ENCODE measurements at regions of chr1 and their contacts with region 1.

Region 1: DNA sequence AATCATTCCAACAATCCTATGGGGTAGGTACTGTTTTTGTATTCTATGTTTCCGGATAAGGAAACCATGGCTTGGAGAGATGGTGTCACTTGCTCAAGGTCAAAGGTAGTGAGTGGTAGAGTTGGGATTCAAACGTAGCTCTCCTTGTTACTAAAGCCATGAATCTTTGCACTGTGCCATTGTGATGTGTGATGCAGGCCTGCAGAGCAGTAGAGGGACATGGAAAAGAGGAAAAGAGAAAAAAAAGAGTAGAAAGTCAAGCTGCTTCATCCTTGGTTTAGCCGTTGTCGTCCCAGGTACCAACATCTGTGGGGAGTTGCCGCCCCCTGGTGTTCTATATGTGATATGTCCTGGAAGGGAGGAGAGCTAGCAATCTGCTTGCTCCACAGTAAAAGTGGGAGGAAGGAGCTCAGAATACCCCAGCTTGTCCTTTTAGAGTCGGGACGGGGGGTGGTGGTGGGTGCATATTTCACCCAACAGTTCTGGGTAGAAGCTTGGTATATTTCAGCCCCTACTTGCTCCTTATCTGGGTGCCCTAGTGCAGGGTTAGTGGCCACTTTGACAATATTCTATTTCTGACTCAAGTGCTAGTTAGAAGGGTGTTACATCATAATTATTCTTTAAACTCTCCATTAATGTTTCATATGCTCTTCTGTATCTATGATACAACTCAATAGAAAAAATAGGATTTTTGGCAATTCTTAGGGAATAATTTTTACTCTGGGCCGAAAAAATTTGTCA is 98.4 kb downstream of the EBNA1BP2 start:
- DNase-seq: peak; percentile 46 to 80 (median 69)
- ATAC-seq: peak; percentile 90
- H3K4me3 ChIP-seq: no peak overlapping the region
- H3K4me3 Mint-ChIP-seq: no peak overlapping the region
- H3K27ac ChIP-seq: no peak overlapping the region
- H3K27ac Mint-ChIP-seq: peak overlapping the region in 2 of 9 donors; percentile 33 to 89
- H3K4me1 ChIP-seq: no peaks in the 10 kb centered on the region
- H3K4me1 Mint-ChIP-seq: peaks cover 0 to 11% (median 6%) of the 10 kb centered on the region in 7 donors
- H3K27me3 ChIP-seq: no peaks in the 10 kb centered on the region
- H3K27me3 Mint-ChIP-seq: peaks cover 0 to 8% (median 0%) of the 10 kb centered on the region in 5 donors

Region 2: DNA sequence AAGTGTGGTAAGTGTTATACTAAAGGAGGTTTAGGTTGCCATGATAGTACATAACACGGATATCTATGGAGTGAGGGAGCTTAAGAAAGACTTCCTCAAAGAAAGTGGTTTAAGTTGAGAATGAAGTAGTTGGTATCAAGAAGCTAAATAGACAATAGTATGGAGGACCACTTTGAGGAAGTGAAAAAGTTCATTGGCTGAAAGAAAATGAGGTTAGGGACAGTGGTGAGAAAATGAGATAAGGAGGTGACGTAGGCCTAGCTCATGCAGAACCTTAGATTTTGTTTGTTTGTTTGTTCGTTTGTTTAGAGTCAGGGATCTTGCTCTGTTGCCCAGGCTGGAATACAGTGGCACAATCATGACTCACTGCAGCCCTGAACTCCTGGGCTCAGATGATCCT is 487.6 kb before region 1 on chr1:
- CTCF ChIA-PET with region 1: interaction called, 13 read pairs
- POLR2A ChIA-PET with region 1: no interaction called
- intact Hi-C with region 1: no loop called
- DNase-seq: no peak
- ATAC-seq: no peak
- H3K4me3 ChIP-seq: no peak overlapping the region
- H3K4me3 Mint-ChIP-seq: no peak overlapping the region
- H3K27ac ChIP-seq: no peak overlapping the region
- H3K27ac Mint-ChIP-seq: no peak overlapping the region
- H3K4me1 ChIP-seq: no peaks in the 10 kb centered on the region
- H3K4me1 Mint-ChIP-seq: no peaks in the 10 kb centered on the region
- H3K27me3 ChIP-seq: no peaks in the 10 kb centered on the region
- H3K27me3 Mint-ChIP-seq: peaks cover 0 to 4% (median 0%) of the 10 kb centered on the region in 5 donors

Region 3: DNA sequence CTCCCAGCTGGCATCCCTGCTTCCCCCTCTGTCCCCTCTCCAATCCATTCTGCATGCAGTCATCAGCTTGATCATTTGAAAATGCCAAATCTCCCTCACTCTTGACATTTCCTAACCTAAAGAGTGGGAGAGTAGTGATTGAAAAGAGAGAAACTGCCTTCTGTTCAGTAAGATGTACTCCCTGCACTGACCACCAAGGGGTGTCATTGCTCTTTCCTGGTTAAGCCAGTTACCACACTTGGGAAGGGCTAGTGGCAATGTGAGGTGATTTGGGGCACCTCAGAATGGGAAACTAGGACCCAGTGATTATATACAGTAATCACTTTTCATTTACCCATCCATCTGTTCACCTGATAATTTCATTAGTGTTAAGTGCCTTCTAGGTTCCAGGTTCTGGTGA is 295.8 kb before region 1 on chr1:
- CTCF ChIA-PET with region 1: interaction called, 19 read pairs
- POLR2A ChIA-PET with region 1: interaction called, 12 read pairs
- intact Hi-C with region 1: loop called in 1 of 2 experiments (anchors 1 kb)
- DNase-seq: peak in 4 of 9 donors; percentile 16 to 36 (median 22)
- ATAC-seq: peak; percentile 63
- H3K4me3 ChIP-seq: no peak overlapping the region
- H3K4me3 Mint-ChIP-seq: no peak overlapping the region
- H3K27ac ChIP-seq: no peak overlapping the region
- H3K27ac Mint-ChIP-seq: no peak overlapping the region
- H3K4me1 ChIP-seq: no peaks in the 10 kb centered on the region
- H3K4me1 Mint-ChIP-seq: peaks cover 7 to 26% (median 15%) of the 10 kb centered on the region in 7 donors
- H3K27me3 ChIP-seq: no peaks in the 10 kb centered on the region
- H3K27me3 Mint-ChIP-seq: no peaks in the 10 kb centered on the region

Region 4: GRCh38 chr1:42913426-42914091 is 160.1 kb before region 1 on chr1:
- CTCF ChIA-PET with region 1: interaction called, 288 read pairs
- POLR2A ChIA-PET with region 1: interaction called, 14 read pairs
- intact Hi-C with region 1: loop called (anchors 1 kb)
- DNase-seq: peak in 7 of 9 donors; percentile 54 to 84 (median 76)
- ATAC-seq: peak; percentile 94
- H3K4me3 ChIP-seq: no peak overlapping the region
- H3K4me3 Mint-ChIP-seq: no peak overlapping the region
- H3K27ac ChIP-seq: no peak overlapping the region
- H3K27ac Mint-ChIP-seq: no peak overlapping the region
- H3K4me1 ChIP-seq: no peaks in the 10 kb centered on the region
- H3K4me1 Mint-ChIP-seq: peaks cover 0 to 5% (median 4%) of the 10 kb centered on the region in 7 donors
- H3K27me3 ChIP-seq: no peaks in the 10 kb centered on the region
- H3K27me3 Mint-ChIP-seq: peaks cover 0 to 8% (median 0%) of the 10 kb centered on the region in 5 donors

Region 5: GRCh38 chr1:42931108-42931539 is 142.5 kb before region 1 on chr1:
- CTCF ChIA-PET with region 1: interaction called, 122 read pairs
- POLR2A ChIA-PET with region 1: interaction called, 8 read pairs
- intact Hi-C with region 1: loop called in 1 of 2 experiments (anchors 1 kb)
- DNase-seq: peak; percentile 36 to 70 (median 58)
- ATAC-seq: peak; percentile 60
- H3K4me3 ChIP-seq: peak overlapping the region; percentile 41
- H3K4me3 Mint-ChIP-seq: peak overlapping the region; percentile 66 to 89 (median 80)
- H3K27ac ChIP-seq: peak overlapping the region; percentile 81
- H3K27ac Mint-ChIP-seq: peak overlapping the region; percentile 87 to 98 (median 93)
- H3K4me1 ChIP-seq: peaks cover 60 to 65% of the 10 kb centered on the region in 2 donors
- H3K4me1 Mint-ChIP-seq: peaks cover 43 to 81% (median 72%) of the 10 kb centered on the region in 7 donors
- H3K27me3 ChIP-seq: no peaks in the 10 kb centered on the region
- H3K27me3 Mint-ChIP-seq: no peaks in the 10 kb centered on the region

Measured in naive thymus-derived CD4-positive, alpha-beta T cell (primary cell).